ENCODE measurements at regions of chr12 and their contacts with region 1.

Region 1: GRCh38 chr12:751192-751998 is 984 bp upstream of the WNK1 start:
- DNase-seq: peak; percentile 52 to 84 (median 75)
- ATAC-seq: peak; percentile 46
- H3K4me3 ChIP-seq: peak overlapping the region; percentile 71
- H3K4me3 Mint-ChIP-seq: no peak overlapping the region
- H3K27ac ChIP-seq: peak overlapping the region; percentile 98
- H3K27ac Mint-ChIP-seq: no peak overlapping the region
- H3K4me1 ChIP-seq: peaks cover 18 to 29% of the 10 kb centered on the region in 2 donors
- H3K4me1 Mint-ChIP-seq: peaks cover 12 to 21% (median 15%) of the 10 kb centered on the region in 7 donors
- H3K27me3 ChIP-seq: no peaks in the 10 kb centered on the region
- H3K27me3 Mint-ChIP-seq: no peaks in the 10 kb centered on the region

Region 2: GRCh38 chr12:389139-390096 is 362.0 kb before region 1 on chr12 and contains the start of gene KDM5A:
- CTCF ChIA-PET with region 1: no interaction called
- POLR2A ChIA-PET with region 1: interaction called, 4 read pairs
- intact Hi-C with region 1: loop called (anchors 1 to 2 kb)
- DNase-seq: peak; percentile 82 to 97 (median 94)
- ATAC-seq: peak; percentile 97
- H3K4me3 ChIP-seq: peak within 1 kb of the TSS; percentile 96
- H3K4me3 Mint-ChIP-seq: peak within 1 kb of the TSS; percentile 91 to 100 (median 97)
- H3K27ac ChIP-seq: peak within 1 kb of the TSS; percentile 91
- H3K27ac Mint-ChIP-seq: peak within 1 kb of the TSS; percentile 95 to 100 (median 99)
- H3K4me1 ChIP-seq: peaks cover 31% of the 10 kb centered on the region in 2 donors
- H3K4me1 Mint-ChIP-seq: peaks cover 28 to 55% (median 39%) of the 10 kb centered on the region in 7 donors
- H3K27me3 ChIP-seq: no peaks in the 10 kb centered on the region
- H3K27me3 Mint-ChIP-seq: peaks cover 0 to 3% (median 0%) of the 10 kb centered on the region in 5 donors
- total RNA-seq, gene KDM5A: 110 to 138 (median 124) TPM

Region 3: GRCh38 chr12:575948-576612 is 175.3 kb before region 1 on chr12:
- CTCF ChIA-PET with region 1: interaction called, 38 read pairs
- POLR2A ChIA-PET with region 1: interaction called, 39 read pairs
- intact Hi-C with region 1: loop called (anchors 1 kb)
- DNase-seq: peak; percentile 63 to 97 (median 83)
- ATAC-seq: peak; percentile 99
- H3K4me3 ChIP-seq: no peak overlapping the region
- H3K4me3 Mint-ChIP-seq: peak overlapping the region; percentile 14 to 70 (median 56)
- H3K27ac ChIP-seq: no peak overlapping the region
- H3K27ac Mint-ChIP-seq: peak overlapping the region in 7 of 9 donors; percentile 44 to 89 (median 76)
- H3K4me1 ChIP-seq: peaks cover 11 to 16% of the 10 kb centered on the region in 2 donors
- H3K4me1 Mint-ChIP-seq: peaks cover 10 to 38% (median 19%) of the 10 kb centered on the region in 7 donors
- H3K27me3 ChIP-seq: no peaks in the 10 kb centered on the region
- H3K27me3 Mint-ChIP-seq: peaks cover 0 to 1% (median 0%) of the 10 kb centered on the region in 5 donors

Region 4: DNA sequence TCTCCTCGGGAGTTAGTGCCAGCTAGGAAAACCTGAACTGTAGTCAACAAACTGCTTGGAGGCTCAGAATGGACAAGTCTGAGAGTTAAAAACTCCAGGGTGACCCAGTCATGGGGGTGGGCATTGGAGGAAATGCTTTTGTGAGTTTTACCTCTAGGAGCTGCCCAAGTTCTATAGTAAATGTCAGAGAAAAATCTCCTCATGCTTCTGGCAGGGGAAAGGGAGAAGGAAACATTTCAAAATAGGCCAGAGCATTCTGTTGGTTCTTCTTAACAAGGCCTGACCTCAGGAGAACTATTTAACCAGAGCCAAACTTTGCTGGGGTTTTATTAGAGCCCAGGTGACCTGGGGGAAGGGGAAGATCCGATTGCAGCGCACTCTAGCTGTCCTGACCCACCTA is 100.4 kb before region 1 on chr12:
- CTCF ChIA-PET with region 1: interaction called, 19 read pairs
- POLR2A ChIA-PET with region 1: interaction called, 10 read pairs
- intact Hi-C with region 1: no loop called
- DNase-seq: peak in 2 of 9 donors; percentile 37 to 41
- ATAC-seq: no peak
- H3K4me3 ChIP-seq: no peak overlapping the region
- H3K4me3 Mint-ChIP-seq: no peak overlapping the region
- H3K27ac ChIP-seq: no peak overlapping the region
- H3K27ac Mint-ChIP-seq: peak overlapping the region in 1 of 9 donors; percentile 13
- H3K4me1 ChIP-seq: no peaks in the 10 kb centered on the region
- H3K4me1 Mint-ChIP-seq: peaks cover 2 to 21% (median 10%) of the 10 kb centered on the region in 7 donors
- H3K27me3 ChIP-seq: no peaks in the 10 kb centered on the region
- H3K27me3 Mint-ChIP-seq: no peaks in the 10 kb centered on the region

Region 5: GRCh38 chr12:718756-719102 is 32.7 kb before region 1 on chr12:
- CTCF ChIA-PET with region 1: interaction called, 70 read pairs
- POLR2A ChIA-PET with region 1: interaction called, 153 read pairs
- intact Hi-C with region 1: loop called (anchors 1 to 2 kb)
- DNase-seq: peak in 1 of 9 donors; percentile 24
- ATAC-seq: peak; percentile 10
- H3K4me3 ChIP-seq: peak overlapping the region; percentile 43
- H3K4me3 Mint-ChIP-seq: peak overlapping the region; percentile 45 to 87 (median 71)
- H3K27ac ChIP-seq: peak overlapping the region; percentile 51
- H3K27ac Mint-ChIP-seq: peak overlapping the region; percentile 78 to 93 (median 86)
- H3K4me1 ChIP-seq: peaks cover under 1 to 33% of the 10 kb centered on the region in 2 donors
- H3K4me1 Mint-ChIP-seq: peaks cover 32 to 67% (median 50%) of the 10 kb centered on the region in 7 donors
- H3K27me3 ChIP-seq: no peaks in the 10 kb centered on the region
- H3K27me3 Mint-ChIP-seq: no peaks in the 10 kb centered on the region

Region 6: GRCh38 chr12:789852-790563 is 38.6 kb after region 1 on chr12:
- CTCF ChIA-PET with region 1: no interaction called
- POLR2A ChIA-PET with region 1: interaction called, 7 read pairs
- intact Hi-C with region 1: loop called in 1 of 2 experiments (anchors 5 kb)
- DNase-seq: no peak
- ATAC-seq: peak; percentile 49
- H3K4me3 ChIP-seq: no peak overlapping the region
- H3K4me3 Mint-ChIP-seq: peak overlapping the region in 7 of 10 donors; percentile 33 to 66 (median 46)
- H3K27ac ChIP-seq: no peak overlapping the region
- H3K27ac Mint-ChIP-seq: peak overlapping the region in 8 of 9 donors; percentile 39 to 88 (median 78)
- H3K4me1 ChIP-seq: peaks cover 32 to 39% of the 10 kb centered on the region in 2 donors
- H3K4me1 Mint-ChIP-seq: peaks cover 53 to 97% (median 89%) of the 10 kb centered on the region in 7 donors
- H3K27me3 ChIP-seq: no peaks in the 10 kb centered on the region
- H3K27me3 Mint-ChIP-seq: no peaks in the 10 kb centered on the region

Region 7: DNA sequence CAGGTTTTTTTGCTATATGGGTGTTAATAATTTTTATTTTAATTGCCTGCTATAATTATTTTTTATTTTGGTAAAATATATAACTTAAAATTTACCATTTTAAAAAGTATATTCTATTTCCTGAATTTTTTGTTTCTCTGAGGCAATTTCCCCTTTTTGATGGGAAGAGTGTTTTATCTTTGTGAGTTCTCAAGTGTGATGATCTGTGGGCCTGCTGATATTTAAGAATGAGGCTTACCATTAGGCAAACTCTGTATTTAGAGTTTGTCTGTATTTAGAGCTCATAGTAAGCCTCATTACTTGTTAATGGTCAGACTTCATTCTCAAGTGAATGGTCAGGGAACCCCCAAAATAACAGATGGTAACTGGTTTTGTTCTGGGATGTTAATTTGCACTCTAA is 49.0 kb after region 1 on chr12:
- CTCF ChIA-PET with region 1: no interaction called
- POLR2A ChIA-PET with region 1: no interaction called
- intact Hi-C with region 1: no loop called
- DNase-seq: no peak
- ATAC-seq: no peak
- H3K4me3 ChIP-seq: no peak overlapping the region
- H3K4me3 Mint-ChIP-seq: peak overlapping the region in 3 of 10 donors; percentile 30 to 47 (median 38)
- H3K27ac ChIP-seq: no peak overlapping the region
- H3K27ac Mint-ChIP-seq: peak overlapping the region in 5 of 9 donors; percentile 12 to 68 (median 60)
- H3K4me1 ChIP-seq: peaks cover 21 to 42% of the 10 kb centered on the region in 2 donors
- H3K4me1 Mint-ChIP-seq: peaks cover 46 to 88% (median 80%) of the 10 kb centered on the region in 7 donors
- H3K27me3 ChIP-seq: no peaks in the 10 kb centered on the region
- H3K27me3 Mint-ChIP-seq: no peaks in the 10 kb centered on the region

Region 8: DNA sequence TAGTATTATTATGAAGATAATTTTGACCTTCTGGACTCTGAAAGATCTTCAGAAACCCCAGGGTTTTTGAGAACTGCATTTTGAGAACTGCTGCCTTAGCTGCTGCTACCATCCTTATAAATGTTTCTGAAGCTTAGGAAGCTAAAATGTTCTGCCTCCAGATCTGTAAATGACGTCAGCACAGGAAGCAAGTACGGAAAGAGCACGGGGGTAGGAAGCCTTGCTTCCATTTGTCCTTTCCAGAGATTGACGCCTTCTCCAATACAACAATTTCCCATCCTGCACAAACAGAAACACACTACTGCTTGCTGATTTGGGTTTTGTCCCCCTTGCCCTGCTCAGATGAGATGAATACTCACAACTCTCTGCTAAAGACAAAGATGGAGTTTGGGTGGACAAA is 180.2 kb after region 1 on chr12:
- CTCF ChIA-PET with region 1: no interaction called
- POLR2A ChIA-PET with region 1: no interaction called
- intact Hi-C with region 1: no loop called
- DNase-seq: no peak
- ATAC-seq: no peak
- H3K4me3 ChIP-seq: no peak overlapping the region
- H3K4me3 Mint-ChIP-seq: no peak overlapping the region
- H3K27ac ChIP-seq: no peak overlapping the region
- H3K27ac Mint-ChIP-seq: peak overlapping the region in 2 of 9 donors; percentile 42 to 72
- H3K4me1 ChIP-seq: no peaks in the 10 kb centered on the region
- H3K4me1 Mint-ChIP-seq: peaks cover 0 to 4% (median 0%) of the 10 kb centered on the region in 7 donors
- H3K27me3 ChIP-seq: no peaks in the 10 kb centered on the region
- H3K27me3 Mint-ChIP-seq: no peaks in the 10 kb centered on the region

Region 9: GRCh38 chr12:998020-998874 is 246.9 kb after region 1 on chr12:
- CTCF ChIA-PET with region 1: no interaction called
- POLR2A ChIA-PET with region 1: no interaction called
- intact Hi-C with region 1: no loop called
- DNase-seq: no peak
- ATAC-seq: no peak
- H3K4me3 ChIP-seq: no peak overlapping the region
- H3K4me3 Mint-ChIP-seq: no peak overlapping the region
- H3K27ac ChIP-seq: no peak overlapping the region
- H3K27ac Mint-ChIP-seq: no peak overlapping the region
- H3K4me1 ChIP-seq: no peaks in the 10 kb centered on the region
- H3K4me1 Mint-ChIP-seq: peaks cover 9 to 55% (median 41%) of the 10 kb centered on the region in 7 donors
- H3K27me3 ChIP-seq: no peaks in the 10 kb centered on the region
- H3K27me3 Mint-ChIP-seq: no peaks in the 10 kb centered on the region

Region 10: GRCh38 chr12:1594261-1595025 is 843.0 kb after region 1 on chr12 and contains the start of gene FBXL14:
- CTCF ChIA-PET with region 1: no interaction called
- POLR2A ChIA-PET with region 1: no interaction called
- intact Hi-C with region 1: loop called (anchors 1 to 5 kb)
- DNase-seq: peak; percentile 87 to 93 (median 92)
- ATAC-seq: peak; percentile 85
- H3K4me3 ChIP-seq: peak within 1 kb of the TSS; percentile 91
- H3K4me3 Mint-ChIP-seq: peak within 1 kb of the TSS; percentile 89 to 98 (median 95)
- H3K27ac ChIP-seq: peak within 1 kb of the TSS; percentile 80
- H3K27ac Mint-ChIP-seq: peak within 1 kb of the TSS; percentile 94 to 97 (median 94)
- H3K4me1 ChIP-seq: peaks cover 19 to 23% of the 10 kb centered on the region in 2 donors
- H3K4me1 Mint-ChIP-seq: peaks cover 40 to 53% (median 44%) of the 10 kb centered on the region in 7 donors
- H3K27me3 ChIP-seq: no peaks in the 10 kb centered on the region
- H3K27me3 Mint-ChIP-seq: peaks cover 0 to 9% (median 0%) of the 10 kb centered on the region in 5 donors
- total RNA-seq, gene FBXL14: 25.6 to 43.8 (median 28.1) TPM